CD4-positive, alpha-beta T cell (primary cell): ENCODE measurements at regions of chr3 and their contacts with region 1.

Region 1: DNA sequence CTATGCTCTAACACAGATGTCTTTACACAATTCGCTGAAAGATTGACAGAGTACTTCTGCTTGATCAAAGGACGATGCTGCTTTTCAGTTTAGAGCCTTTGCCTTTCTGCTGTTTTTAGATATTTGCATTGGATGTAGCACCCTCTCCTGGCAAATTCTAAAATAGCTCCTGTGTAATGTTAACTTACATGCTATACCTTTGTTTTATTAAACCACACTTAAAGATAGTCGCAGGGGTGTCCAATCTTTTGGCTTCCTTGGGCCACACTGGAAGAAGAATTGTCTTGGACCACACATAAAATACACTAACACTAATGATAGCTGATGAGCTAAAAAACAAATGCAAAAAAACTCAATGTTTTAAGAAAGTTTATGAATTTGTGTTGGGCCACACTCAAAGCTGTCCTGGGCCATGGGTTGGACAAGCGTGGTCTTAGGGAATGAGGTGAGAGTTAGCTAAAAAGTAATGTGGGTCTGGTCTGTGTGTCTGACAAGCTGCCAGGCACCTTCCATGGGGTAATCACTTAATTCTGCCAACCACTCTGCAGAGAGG is 62.9 kb downstream of the ATG7 start:
- DNase-seq: peak in 5 of 14 experiments; percentile 1 to 69 (median 67)
- ATAC-seq: peak; percentile 73
- H3K4me3 ChIP-seq: no peak overlapping the region
- H3K4me3 Mint-ChIP-seq: no peak overlapping the region
- H3K27ac ChIP-seq: no peak overlapping the region
- H3K27ac Mint-ChIP-seq: no peak overlapping the region
- H3K4me1 ChIP-seq: no peaks in the 10 kb centered on the region
- H3K4me1 Mint-ChIP-seq: no peaks in the 10 kb centered on the region
- H3K27me3 ChIP-seq: no peaks in the 10 kb centered on the region
- H3K27me3 Mint-ChIP-seq: no peaks in the 10 kb centered on the region
- CTCF ChIP-seq: peak; percentile 64

Region 2: DNA sequence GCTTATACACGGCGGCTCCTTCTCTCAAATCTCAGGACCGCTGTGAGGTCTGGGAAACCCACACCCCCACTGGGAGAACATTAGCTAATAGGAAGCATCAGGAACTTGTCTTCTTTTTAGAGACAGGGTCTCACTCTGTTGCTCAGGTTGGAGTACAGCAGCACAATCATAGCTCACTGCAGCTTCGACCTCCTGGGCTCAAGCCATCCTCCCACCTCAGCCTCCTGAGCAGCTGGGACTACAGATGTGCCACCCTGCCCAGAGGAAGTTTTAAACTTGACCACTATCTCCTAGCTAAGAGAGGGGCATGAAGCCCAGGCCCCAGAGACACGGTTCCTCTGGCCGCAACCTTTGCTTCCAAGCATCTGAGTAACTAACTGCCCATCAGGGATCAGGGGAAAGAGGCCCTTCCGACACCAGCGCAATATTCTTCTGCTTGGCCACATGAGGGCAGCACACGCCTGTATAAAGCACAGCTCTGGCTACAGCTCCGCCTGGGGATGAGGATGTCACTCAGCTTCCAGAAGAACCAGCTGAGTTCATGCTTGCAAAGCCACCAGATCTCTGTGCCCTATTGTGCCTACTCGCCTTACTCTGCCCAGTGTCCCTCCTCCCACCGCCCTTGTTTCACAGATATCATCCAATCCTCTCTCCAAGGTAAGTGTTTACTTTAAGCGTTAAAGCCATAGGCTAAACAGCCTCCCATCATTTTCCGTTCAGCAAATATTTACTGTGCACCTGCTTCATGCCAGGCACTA is 576.6 kb before region 1 on chr3:
- CTCF ChIA-PET with region 1: interaction called, 4 read pairs
- POLR2A ChIA-PET with region 1: no interaction called
- intact Hi-C with region 1: loop called in 1 of 2 experiments (anchors 10 kb)
- DNase-seq: peak in 11 of 14 experiments; percentile 11 to 70 (median 33)
- ATAC-seq: peak; percentile 65
- H3K4me3 ChIP-seq: no peak overlapping the region
- H3K4me3 Mint-ChIP-seq: no peak overlapping the region
- H3K27ac ChIP-seq: no peak overlapping the region
- H3K27ac Mint-ChIP-seq: no peak overlapping the region
- H3K4me1 ChIP-seq: no peaks in the 10 kb centered on the region
- H3K4me1 Mint-ChIP-seq: no peaks in the 10 kb centered on the region
- H3K27me3 ChIP-seq: peaks cover 7 to 14% of the 10 kb centered on the region in 2 experiments
- H3K27me3 Mint-ChIP-seq: peaks cover 80% of the 10 kb centered on the region
- CTCF ChIP-seq: peak; percentile 64

Region 3: GRCh38 chr3:10945683-10946287 is 389.3 kb before region 1 on chr3:
- CTCF ChIA-PET with region 1: no interaction called
- POLR2A ChIA-PET with region 1: no interaction called
- intact Hi-C with region 1: loop called in 1 of 2 experiments (anchors 5 kb)
- DNase-seq: peak in 13 of 14 experiments; percentile 7 to 62 (median 25)
- ATAC-seq: no peak
- H3K4me3 ChIP-seq: no peak overlapping the region
- H3K4me3 Mint-ChIP-seq: no peak overlapping the region
- H3K27ac ChIP-seq: no peak overlapping the region
- H3K27ac Mint-ChIP-seq: no peak overlapping the region
- H3K4me1 ChIP-seq: no peaks in the 10 kb centered on the region
- H3K4me1 Mint-ChIP-seq: no peaks in the 10 kb centered on the region
- H3K27me3 ChIP-seq: peaks cover under 1 to 2% of the 10 kb centered on the region in 2 experiments
- H3K27me3 Mint-ChIP-seq: peaks cover 33% of the 10 kb centered on the region
- CTCF ChIP-seq: peak; percentile 66

Region 4: GRCh38 chr3:11060500-11061251 is 274.5 kb before region 1 on chr3:
- CTCF ChIA-PET with region 1: no interaction called
- POLR2A ChIA-PET with region 1: no interaction called
- intact Hi-C with region 1: loop called in 1 of 2 experiments (anchors 5 kb)
- DNase-seq: peak in 11 of 14 experiments; percentile 4 to 57 (median 15)
- ATAC-seq: no peak
- H3K4me3 ChIP-seq: no peak overlapping the region
- H3K4me3 Mint-ChIP-seq: no peak overlapping the region
- H3K27ac ChIP-seq: no peak overlapping the region
- H3K27ac Mint-ChIP-seq: no peak overlapping the region
- H3K4me1 ChIP-seq: peaks cover 4% of the 10 kb centered on the region
- H3K4me1 Mint-ChIP-seq: no peaks in the 10 kb centered on the region
- H3K27me3 ChIP-seq: peaks cover 6 to 9% of the 10 kb centered on the region in 2 experiments
- H3K27me3 Mint-ChIP-seq: peaks cover 22% of the 10 kb centered on the region
- CTCF ChIP-seq: peak; percentile 65

Region 5: DNA sequence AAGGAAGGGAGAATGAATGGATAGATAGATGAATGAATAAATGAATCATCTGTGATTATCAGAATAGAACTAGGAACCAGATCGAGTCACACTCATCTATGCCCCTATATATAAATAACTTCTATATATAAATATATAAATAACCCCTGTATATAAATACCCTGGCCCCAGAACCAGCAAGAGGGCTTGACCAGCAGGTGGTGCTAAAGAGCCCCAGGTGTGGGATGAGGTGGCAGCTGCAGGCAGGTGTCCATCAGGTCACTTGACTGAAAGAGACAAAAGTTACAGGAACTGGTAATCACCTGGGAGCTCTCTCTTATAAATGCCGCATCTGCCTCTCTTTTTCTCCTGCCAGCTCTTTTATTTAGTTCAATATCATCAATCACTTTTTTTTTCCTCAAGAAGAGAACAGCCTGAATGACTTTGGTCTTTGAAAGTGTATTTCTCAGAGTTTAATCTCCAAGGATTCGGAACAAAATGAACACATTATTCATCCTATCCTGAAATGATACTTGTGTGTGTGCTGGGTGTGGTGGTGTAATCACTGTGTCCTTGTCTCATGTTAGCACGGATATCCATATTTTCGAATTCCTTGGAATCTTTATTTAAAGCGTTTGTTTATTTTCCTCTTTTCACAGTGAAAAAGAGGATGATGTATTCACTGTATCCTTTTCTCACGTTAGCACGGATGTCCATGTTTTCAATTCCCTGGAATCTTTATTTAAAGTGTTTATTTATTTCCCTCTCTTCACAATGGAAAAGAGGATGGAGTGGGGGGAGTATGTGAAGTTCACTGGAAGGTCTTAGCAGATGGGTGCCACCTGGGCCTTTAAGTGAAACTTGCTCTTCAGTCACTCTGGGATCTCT is 98.3 kb before region 1 on chr3:
- CTCF ChIA-PET with region 1: interaction called, 19 read pairs
- POLR2A ChIA-PET with region 1: interaction called, 6 read pairs
- intact Hi-C with region 1: loop called (anchors 1 kb)
- DNase-seq: peak; percentile 68 to 87 (median 74)
- ATAC-seq: peak; percentile 66
- H3K4me3 ChIP-seq: no peak overlapping the region
- H3K4me3 Mint-ChIP-seq: no peak overlapping the region
- H3K27ac ChIP-seq: no peak overlapping the region
- H3K27ac Mint-ChIP-seq: no peak overlapping the region
- H3K4me1 ChIP-seq: no peaks in the 10 kb centered on the region
- H3K4me1 Mint-ChIP-seq: no peaks in the 10 kb centered on the region
- H3K27me3 ChIP-seq: peaks cover 0 to 7% of the 10 kb centered on the region in 2 experiments
- H3K27me3 Mint-ChIP-seq: peaks cover 8% of the 10 kb centered on the region
- CTCF ChIP-seq: peak; percentile 89